Right ventricle myocardium inferior (tissue), 1 donor: ENCODE measurements at regions of chr1 and their contacts with region 1.

Region 1: GRCh38 chr1:84377480-84378095 is 20.7 kb upstream of the DNASE2B start:
- DNase-seq: no peak
- ATAC-seq: peak; percentile 64

Region 2: GRCh38 chr1:84192681-84193080 is 184.9 kb before region 1 on chr1:
- intact Hi-C with region 1: no loop called
- DNase-seq: no peak
- ATAC-seq: no peak

Region 3: DNA sequence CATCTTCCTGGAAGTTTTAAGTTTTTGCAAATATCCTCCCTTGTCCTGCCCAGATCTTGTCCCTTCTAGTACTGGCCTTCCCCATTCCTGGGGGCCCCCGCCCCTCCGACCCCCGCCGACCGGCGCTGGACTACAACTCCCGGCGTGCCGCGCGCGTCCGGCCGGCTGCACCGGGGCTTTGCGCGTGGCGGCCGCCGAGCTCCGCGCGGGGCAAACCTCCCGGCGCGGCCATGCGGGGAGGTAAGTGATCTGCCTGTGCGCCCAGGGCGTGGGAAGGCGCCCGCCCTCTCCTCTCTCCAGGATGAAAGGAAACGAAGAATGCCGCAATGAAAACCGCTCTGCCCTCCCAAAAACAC is 79.3 kb before region 1 on chr1:
- intact Hi-C with region 1: loop called (anchors 5 kb)
- DNase-seq: peak; percentile 81
- ATAC-seq: peak; percentile 90